Mucosa of descending colon (tissue), 3 donors: ENCODE measurements at regions of chr10 and their contacts with region 1.

Region 1: GRCh38 chr10:22251751-22252223 is 34.0 kb upstream of the EBLN1 start:
- DNase-seq: peak; percentile 64 to 71 (median 69)
- ATAC-seq: peak; percentile 69
- H3K4me3 ChIP-seq: peak overlapping the region; percentile 29
- H3K4me1 ChIP-seq: peaks cover 5% of the 10 kb centered on the region
- CTCF ChIP-seq: no peak

Region 2: GRCh38 chr10:22320798-22321563 is 69.2 kb after region 1 on chr10 and contains the start of gene BMI1:
- intact Hi-C with region 1: loop called in 1 of 2 experiments (anchors 5 kb)
- DNase-seq: peak; percentile 79 to 84 (median 80)
- ATAC-seq: peak; percentile 65
- H3K4me3 ChIP-seq: peak within 1 kb of the TSS; percentile 79
- H3K4me1 ChIP-seq: peaks cover 35% of the 10 kb centered on the region
- CTCF ChIP-seq: no peak
- total RNA-seq, gene BMI1: 26.6 to 76.6 (median 28.7) TPM